ENCODE measurements at regions of chr7 and their contacts with region 1.

Region 1: GRCh38 chr7:13099154-13099795 is 411.8 kb downstream of the ARL4A start:
- DNase-seq: peak; percentile 86
- ATAC-seq: peak; percentile 97
- H3K4me3 ChIP-seq: no peak overlapping the region
- H3K27ac ChIP-seq: peak overlapping the region; percentile 61
- H3K4me1 ChIP-seq: peaks cover 18% of the 10 kb centered on the region
- H3K27me3 ChIP-seq: no peaks in the 10 kb centered on the region
- CTCF ChIP-seq: no peak

Region 2: DNA sequence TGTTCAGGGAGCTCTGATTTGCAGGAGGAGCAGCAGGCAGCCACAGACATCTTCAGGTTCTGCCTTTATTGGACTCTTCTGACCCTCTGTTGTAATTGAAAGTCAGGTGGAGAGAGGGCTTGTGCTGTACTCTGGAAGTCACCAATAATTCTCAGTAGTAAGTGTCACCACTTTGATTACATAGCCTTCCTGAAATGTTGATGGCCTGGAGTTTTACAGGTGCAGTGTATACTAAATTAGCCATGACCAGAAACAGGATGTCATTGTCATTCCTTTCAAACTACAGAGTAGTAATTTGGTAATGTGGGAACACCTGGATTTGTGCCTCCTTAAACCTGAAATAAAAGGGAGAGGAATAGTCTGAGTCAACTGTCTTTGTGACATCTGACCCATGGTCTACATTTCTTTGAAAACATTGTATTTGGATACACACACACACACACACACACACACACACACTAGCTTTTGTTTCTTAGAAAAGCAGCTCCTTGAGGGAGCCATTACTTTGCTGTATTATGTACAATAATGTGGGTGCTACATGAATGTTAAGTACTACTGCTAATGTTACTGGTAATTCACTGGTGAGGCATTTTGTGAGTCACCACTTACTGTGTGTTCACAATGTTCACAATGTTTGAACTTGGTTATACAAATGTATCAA is 392.3 kb before region 1 on chr7:
- CTCF ChIA-PET with region 1: no interaction called
- POLR2A ChIA-PET with region 1: no interaction called
- intact Hi-C with region 1: loop called (anchors 1 kb)
- DNase-seq: peak; percentile 91
- ATAC-seq: peak; percentile 84
- H3K4me3 ChIP-seq: peak overlapping the region; percentile 26; the same call in 1 of the 2 replicates
- H3K27ac ChIP-seq: peak overlapping the region; percentile 85
- H3K4me1 ChIP-seq: peaks cover 57% of the 10 kb centered on the region
- H3K27me3 ChIP-seq: no peaks in the 10 kb centered on the region
- CTCF ChIP-seq: no peak

Region 3: GRCh38 chr7:13050703-13051102 is 48.6 kb before region 1 on chr7:
- CTCF ChIA-PET with region 1: no interaction called
- POLR2A ChIA-PET with region 1: no interaction called
- intact Hi-C with region 1: loop called (anchors 5 kb)
- DNase-seq: peak; percentile 73
- ATAC-seq: peak; percentile 90
- H3K4me3 ChIP-seq: no peak overlapping the region
- H3K27ac ChIP-seq: peak overlapping the region; percentile 43
- H3K4me1 ChIP-seq: peaks cover 22% of the 10 kb centered on the region
- H3K27me3 ChIP-seq: no peaks in the 10 kb centered on the region
- CTCF ChIP-seq: no peak

Region 4: DNA sequence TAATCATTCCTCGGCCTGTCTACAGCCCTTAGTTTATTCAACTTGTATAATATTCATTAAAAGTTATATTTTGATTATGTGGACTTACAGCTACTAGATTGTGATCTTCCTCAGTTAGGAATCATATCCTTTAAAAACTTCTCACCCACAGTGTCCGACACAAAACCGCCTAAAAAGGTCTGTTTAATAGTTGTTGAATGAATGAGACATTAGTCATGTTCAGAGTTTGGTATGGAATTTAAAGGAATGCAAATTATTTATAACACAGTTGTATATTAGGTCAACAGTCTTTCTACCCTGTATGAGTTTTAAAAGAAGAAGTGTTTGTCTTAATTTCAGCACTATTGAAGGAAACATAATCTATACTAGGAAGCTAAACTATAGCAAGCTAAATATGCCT is 21.8 kb before region 1 on chr7:
- CTCF ChIA-PET with region 1: no interaction called
- POLR2A ChIA-PET with region 1: no interaction called
- intact Hi-C with region 1: loop called (anchors 2 kb)
- DNase-seq: peak; percentile 74
- ATAC-seq: peak; percentile 88
- H3K4me3 ChIP-seq: 0 out of 2 replicates have a peak overlapping the region, but pooled peaks have one; percentile 7
- H3K27ac ChIP-seq: peak overlapping the region; percentile 25; the same call in 1 of the 2 replicates
- H3K4me1 ChIP-seq: peaks cover 30% of the 10 kb centered on the region
- H3K27me3 ChIP-seq: no peaks in the 10 kb centered on the region
- CTCF ChIP-seq: no peak

Region 5: GRCh38 chr7:13179102-13179501 is 79.8 kb after region 1 on chr7:
- CTCF ChIA-PET with region 1: no interaction called
- POLR2A ChIA-PET with region 1: no interaction called
- intact Hi-C with region 1: loop called (anchors 2 kb)
- DNase-seq: peak; percentile 30
- ATAC-seq: peak; percentile 60
- H3K4me3 ChIP-seq: no peak overlapping the region
- H3K27ac ChIP-seq: no peak overlapping the region
- H3K4me1 ChIP-seq: peaks cover 18% of the 10 kb centered on the region
- H3K27me3 ChIP-seq: no peaks in the 10 kb centered on the region
- CTCF ChIP-seq: peak; percentile 48; the same call in 1 of the 2 replicates

Measured in PC-3 (cell line).